ENCODE measurements at regions of chr7 and their contacts with region 1.

Region 1: DNA sequence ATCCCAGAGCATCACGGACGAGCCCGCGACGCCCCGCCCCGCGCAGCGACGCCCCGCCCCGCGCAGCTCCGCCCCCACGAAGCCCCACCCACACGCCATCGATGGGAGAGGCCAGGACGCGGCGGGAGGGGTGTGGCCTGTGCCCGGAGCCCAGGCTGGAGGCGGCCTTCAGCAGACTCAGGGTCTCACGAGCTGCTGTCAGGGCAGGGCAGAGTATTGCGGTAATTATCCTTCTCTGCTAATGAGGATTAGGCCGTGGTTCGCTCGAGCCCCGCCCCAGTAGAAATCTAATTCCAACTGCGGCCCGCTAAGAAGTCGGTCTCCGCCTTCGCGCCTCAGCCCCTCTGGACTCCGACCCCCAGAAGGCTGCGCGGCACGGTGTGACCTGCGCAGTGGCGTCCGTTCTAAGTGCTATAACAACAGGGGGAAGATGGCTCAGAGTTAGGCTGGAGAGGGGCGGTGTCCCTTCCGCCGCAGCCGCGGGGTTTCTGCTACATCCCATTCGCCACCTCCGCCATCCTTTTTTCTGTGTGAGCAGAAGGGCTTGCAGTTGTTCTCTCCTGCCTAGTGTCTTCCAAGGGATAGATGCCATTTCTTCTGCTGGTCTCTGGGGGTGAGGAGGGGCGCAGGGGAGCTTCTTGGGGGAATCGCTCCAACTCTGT is 337 bp upstream of the NT5C3A start:
- DNase-seq: peak; percentile 93
- ATAC-seq: peak; percentile 95
- H3K4me3 Mint-ChIP-seq: peak overlapping the region; percentile 93
- H3K27ac Mint-ChIP-seq: peak overlapping the region; percentile 94
- H3K4me1 Mint-ChIP-seq: peaks cover 35% of the 10 kb centered on the region
- H3K27me3 Mint-ChIP-seq: peaks cover 8% of the 10 kb centered on the region

Region 2: DNA sequence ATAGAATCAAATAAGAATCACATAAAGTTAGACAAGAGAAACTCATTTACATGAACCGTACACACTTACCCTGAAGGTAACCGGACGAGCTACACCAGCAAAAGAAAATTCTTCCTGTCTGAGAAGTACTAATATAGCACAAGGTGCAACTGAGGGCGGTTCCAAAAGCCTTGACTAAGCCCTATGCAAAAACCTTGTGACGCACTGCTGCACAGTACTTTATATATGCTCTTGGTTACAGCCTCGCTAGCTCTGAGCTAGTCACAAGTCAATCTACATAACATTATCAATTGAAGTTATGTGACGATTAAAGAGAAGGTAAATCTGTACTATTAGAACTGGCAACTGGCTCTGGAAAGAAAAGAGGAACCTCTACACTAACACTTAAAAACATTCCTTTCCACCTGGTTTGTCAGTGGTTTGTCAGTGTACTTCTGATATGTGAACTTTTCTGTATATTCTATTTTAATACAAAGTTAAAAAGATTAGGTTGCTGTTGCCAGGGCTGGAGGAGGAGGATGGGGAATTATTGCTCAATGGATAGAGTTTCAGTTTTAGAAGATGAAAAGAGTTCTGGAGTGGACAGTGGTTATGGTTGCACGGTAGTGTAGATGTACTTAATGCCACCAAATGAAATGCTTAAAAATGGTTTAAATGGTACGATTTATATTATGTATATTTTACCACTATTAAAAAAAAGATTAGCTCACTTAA is 22.0 kb before region 1 on chr7:
- CTCF ChIA-PET with region 1: interaction called, 17 read pairs
- POLR2A ChIA-PET with region 1: interaction called, 30 read pairs
- DNase-seq: peak; percentile 84
- ATAC-seq: peak; percentile 98
- H3K4me3 Mint-ChIP-seq: peak overlapping the region; percentile 78
- H3K27ac Mint-ChIP-seq: peak overlapping the region; percentile 73
- H3K4me1 Mint-ChIP-seq: peaks cover 43% of the 10 kb centered on the region
- H3K27me3 Mint-ChIP-seq: no peaks in the 10 kb centered on the region